CD8-positive, alpha-beta T cell (primary cell): ENCODE measurements at regions of chr7 and their contacts with region 1.

Region 1: GRCh38 chr7:141014524-141015395 is at the start of gene MRPS33:
- DNase-seq: peak; percentile 88 to 98 (median 94)
- ATAC-seq: peak; percentile 96
- H3K4me3 ChIP-seq: peak within 1 kb of the TSS; percentile 71 to 80
- H3K4me3 Mint-ChIP-seq: peak within 1 kb of the TSS; percentile 100
- H3K27ac ChIP-seq: peak within 1 kb of the TSS; percentile 96 to 100
- H3K27ac Mint-ChIP-seq: peak within 1 kb of the TSS; percentile 100
- H3K4me1 ChIP-seq: peaks cover 17% of the 10 kb centered on the region
- H3K4me1 Mint-ChIP-seq: peaks cover 32% of the 10 kb centered on the region
- H3K27me3 ChIP-seq: no peaks in the 10 kb centered on the region
- H3K27me3 Mint-ChIP-seq: peaks cover 12% of the 10 kb centered on the region
- CTCF ChIP-seq: peak; percentile 45
- total RNA-seq, gene MRPS33: 17.4 to 19.9 TPM

Region 2: GRCh38 chr7:139777948-139778841 is 1236.6 kb before region 1 on chr7 and contains the start of gene HIPK2:
- CTCF ChIA-PET with region 1: no interaction called
- POLR2A ChIA-PET with region 1: no interaction called
- intact Hi-C with region 1: loop called in 1 of 2 experiments (anchors 5 kb)
- DNase-seq: peak; percentile 40 to 84 (median 72)
- ATAC-seq: peak; percentile 60
- H3K4me3 ChIP-seq: peak within 1 kb of the TSS; percentile 73
- H3K4me3 Mint-ChIP-seq: peak within 1 kb of the TSS; percentile 98
- H3K27ac ChIP-seq: peak within 1 kb of the TSS; percentile 62 to 70
- H3K27ac Mint-ChIP-seq: peak within 1 kb of the TSS; percentile 96
- H3K4me1 ChIP-seq: peaks cover 35% of the 10 kb centered on the region
- H3K4me1 Mint-ChIP-seq: peaks cover 45% of the 10 kb centered on the region
- H3K27me3 ChIP-seq: no peaks in the 10 kb centered on the region
- H3K27me3 Mint-ChIP-seq: peaks cover 5% of the 10 kb centered on the region
- CTCF ChIP-seq: no peak
- total RNA-seq, gene HIPK2: 19.8 to 21.3 TPM

Region 3: DNA sequence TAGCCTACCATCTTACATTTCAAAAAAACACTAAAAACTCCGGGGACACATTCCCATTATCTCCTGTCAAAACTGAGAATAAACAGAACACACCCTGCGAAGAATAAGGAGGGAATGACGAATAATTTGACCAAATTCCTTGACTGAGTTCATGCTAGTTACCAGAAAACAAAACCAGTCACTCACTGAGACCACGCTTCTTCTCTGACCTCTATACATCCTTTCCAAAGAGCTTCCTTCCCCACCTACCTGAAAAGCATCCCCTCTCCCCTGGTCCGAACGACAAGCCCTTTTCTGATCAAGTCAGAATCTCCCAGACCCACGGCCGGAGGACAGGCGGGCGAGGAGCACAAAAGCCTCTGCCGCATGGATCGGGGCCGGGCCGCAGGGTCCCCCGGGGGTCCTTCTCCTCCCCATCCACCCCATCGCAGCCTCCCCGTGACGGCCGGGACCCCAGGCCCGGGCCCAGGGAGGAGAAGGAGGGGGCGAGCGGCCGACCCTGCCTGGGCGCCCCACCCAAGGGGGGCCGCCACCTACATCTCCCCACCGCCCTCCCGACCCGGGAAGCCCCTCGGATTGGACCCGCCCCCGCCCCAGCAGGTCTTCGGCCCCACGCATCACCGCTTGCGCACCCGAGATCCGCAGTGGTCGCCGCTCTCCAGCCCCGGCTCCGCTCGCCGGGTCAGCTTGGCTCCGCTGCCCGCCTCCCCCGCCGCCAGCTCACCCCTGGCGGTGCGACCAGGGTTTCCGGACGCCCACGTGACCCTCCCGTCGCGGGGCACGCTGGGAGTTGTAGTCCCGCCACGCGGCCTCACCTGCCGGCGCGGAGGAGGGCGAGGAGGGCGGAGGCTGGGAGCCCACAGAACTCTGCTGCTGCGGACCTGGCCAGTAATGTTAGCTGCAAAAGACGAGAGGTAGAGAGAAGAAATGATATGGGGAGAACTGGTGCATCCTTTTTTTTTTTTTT is 616.7 kb before region 1 on chr7 and contains the start of gene SLC37A3:
- CTCF ChIA-PET with region 1: no interaction called
- POLR2A ChIA-PET with region 1: no interaction called
- intact Hi-C with region 1: loop called (anchors 5 to 10 kb)
- DNase-seq: peak; percentile 70 to 91 (median 87)
- ATAC-seq: peak; percentile 96
- H3K4me3 ChIP-seq: peak within 1 kb of the TSS; percentile 77 to 84
- H3K4me3 Mint-ChIP-seq: peak within 1 kb of the TSS; percentile 90
- H3K27ac ChIP-seq: peak within 1 kb of the TSS; percentile 48 to 59
- H3K27ac Mint-ChIP-seq: peak within 1 kb of the TSS; percentile 81
- H3K4me1 ChIP-seq: peaks cover 14% of the 10 kb centered on the region
- H3K4me1 Mint-ChIP-seq: peaks cover 28% of the 10 kb centered on the region
- H3K27me3 ChIP-seq: no peaks in the 10 kb centered on the region
- H3K27me3 Mint-ChIP-seq: no peaks in the 10 kb centered on the region
- CTCF ChIP-seq: peak; percentile 25
- total RNA-seq, gene SLC37A3: 28.4 to 32.1 TPM

Region 4: GRCh38 chr7:140653319-140654108 is 361.2 kb before region 1 on chr7:
- CTCF ChIA-PET with region 1: no interaction called
- POLR2A ChIA-PET with region 1: no interaction called
- intact Hi-C with region 1: loop called in 1 of 2 experiments (anchors 5 kb)
- DNase-seq: peak in 5 of 9 experiments; percentile 25 to 69 (median 55)
- ATAC-seq: peak; percentile 33
- H3K4me3 ChIP-seq: no peak overlapping the region
- H3K4me3 Mint-ChIP-seq: no peak overlapping the region
- H3K27ac ChIP-seq: no peak overlapping the region
- H3K27ac Mint-ChIP-seq: no peak overlapping the region
- H3K4me1 ChIP-seq: peaks cover 17% of the 10 kb centered on the region
- H3K4me1 Mint-ChIP-seq: peaks cover 22% of the 10 kb centered on the region
- H3K27me3 ChIP-seq: no peaks in the 10 kb centered on the region
- H3K27me3 Mint-ChIP-seq: peaks cover 15% of the 10 kb centered on the region
- CTCF ChIP-seq: peak; percentile 91

Region 5: GRCh38 chr7:140726281-140726680 is 288.5 kb before region 1 on chr7:
- CTCF ChIA-PET with region 1: no interaction called
- POLR2A ChIA-PET with region 1: interaction called, 3 read pairs
- intact Hi-C with region 1: loop called in 1 of 2 experiments (anchors 5 kb)
- DNase-seq: peak in 2 of 9 experiments; percentile 11 to 38
- ATAC-seq: no peak
- H3K4me3 ChIP-seq: no peak overlapping the region
- H3K4me3 Mint-ChIP-seq: no peak overlapping the region
- H3K27ac ChIP-seq: no peak overlapping the region
- H3K27ac Mint-ChIP-seq: no peak overlapping the region
- H3K4me1 ChIP-seq: peaks cover 13% of the 10 kb centered on the region
- H3K4me1 Mint-ChIP-seq: peaks cover 26% of the 10 kb centered on the region
- H3K27me3 ChIP-seq: no peaks in the 10 kb centered on the region
- H3K27me3 Mint-ChIP-seq: no peaks in the 10 kb centered on the region
- CTCF ChIP-seq: peak; percentile 25

Region 6: GRCh38 chr7:140902303-140902953 is 112.3 kb before region 1 on chr7:
- CTCF ChIA-PET with region 1: no interaction called
- POLR2A ChIA-PET with region 1: no interaction called
- intact Hi-C with region 1: no loop called
- DNase-seq: peak in 2 of 9 experiments; percentile 28 to 57
- ATAC-seq: peak; percentile 52
- H3K4me3 ChIP-seq: peak overlapping the region in 1 of 2 experiments; percentile 22
- H3K4me3 Mint-ChIP-seq: peak overlapping the region; percentile 54
- H3K27ac ChIP-seq: peak overlapping the region; percentile 12 to 31
- H3K27ac Mint-ChIP-seq: peak overlapping the region; percentile 78
- H3K4me1 ChIP-seq: peaks cover 22% of the 10 kb centered on the region
- H3K4me1 Mint-ChIP-seq: peaks cover 73% of the 10 kb centered on the region
- H3K27me3 ChIP-seq: no peaks in the 10 kb centered on the region
- H3K27me3 Mint-ChIP-seq: no peaks in the 10 kb centered on the region
- CTCF ChIP-seq: no peak

Region 7: DNA sequence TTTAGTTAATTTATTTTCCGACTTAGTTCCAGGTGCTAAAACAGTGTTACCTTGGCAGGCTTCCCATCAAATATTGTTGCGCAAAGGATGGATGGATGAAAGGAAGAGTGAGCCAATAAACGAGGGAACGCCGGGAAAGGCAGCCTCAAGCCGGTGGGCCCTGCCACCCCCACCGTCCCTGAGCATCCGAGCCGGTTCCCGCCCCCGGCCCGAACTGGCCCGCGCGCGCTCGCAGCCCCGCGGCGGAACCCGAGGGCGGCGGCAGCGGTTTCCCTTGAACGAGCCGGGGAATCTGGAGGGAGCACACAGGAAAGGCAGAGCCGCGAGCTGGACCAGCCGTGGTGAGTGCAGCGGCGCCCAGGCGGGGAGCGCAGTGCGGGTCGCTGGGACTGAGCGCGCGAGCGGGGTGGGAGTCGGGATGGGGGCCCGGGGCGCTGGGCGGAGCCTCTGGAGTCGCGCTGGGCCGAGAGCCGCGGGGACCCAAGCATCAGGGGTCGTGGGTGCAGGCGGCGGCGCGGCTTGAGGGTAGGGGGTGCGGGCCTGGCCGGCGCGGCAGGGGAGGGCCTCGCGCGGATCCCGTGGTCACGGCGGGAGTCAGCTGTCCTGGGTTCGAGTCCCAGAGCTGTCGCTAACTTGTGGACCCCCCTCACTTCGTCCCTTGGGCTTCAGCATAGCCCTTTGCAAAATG is 536.5 kb after region 1 on chr7 and contains the start of gene AGK:
- CTCF ChIA-PET with region 1: interaction called, 3 read pairs
- POLR2A ChIA-PET with region 1: interaction called, 5 read pairs
- intact Hi-C with region 1: loop called (anchors 2 to 5 kb)
- DNase-seq: peak; percentile 55 to 86 (median 72)
- ATAC-seq: peak; percentile 96
- H3K4me3 ChIP-seq: peak within 1 kb of the TSS; percentile 68 to 82
- H3K4me3 Mint-ChIP-seq: peak within 1 kb of the TSS; percentile 93
- H3K27ac ChIP-seq: peak within 1 kb of the TSS; percentile 34 to 50
- H3K27ac Mint-ChIP-seq: peak within 1 kb of the TSS; percentile 89
- H3K4me1 ChIP-seq: peaks cover 18% of the 10 kb centered on the region
- H3K4me1 Mint-ChIP-seq: peaks cover 31% of the 10 kb centered on the region
- H3K27me3 ChIP-seq: no peaks in the 10 kb centered on the region
- H3K27me3 Mint-ChIP-seq: no peaks in the 10 kb centered on the region
- CTCF ChIP-seq: no peak
- total RNA-seq, gene AGK: 20.5 to 22.6 TPM